CD8-positive, alpha-beta T cell (primary cell): ENCODE measurements at regions of chr10 and their contacts with region 1.

Region 1: DNA sequence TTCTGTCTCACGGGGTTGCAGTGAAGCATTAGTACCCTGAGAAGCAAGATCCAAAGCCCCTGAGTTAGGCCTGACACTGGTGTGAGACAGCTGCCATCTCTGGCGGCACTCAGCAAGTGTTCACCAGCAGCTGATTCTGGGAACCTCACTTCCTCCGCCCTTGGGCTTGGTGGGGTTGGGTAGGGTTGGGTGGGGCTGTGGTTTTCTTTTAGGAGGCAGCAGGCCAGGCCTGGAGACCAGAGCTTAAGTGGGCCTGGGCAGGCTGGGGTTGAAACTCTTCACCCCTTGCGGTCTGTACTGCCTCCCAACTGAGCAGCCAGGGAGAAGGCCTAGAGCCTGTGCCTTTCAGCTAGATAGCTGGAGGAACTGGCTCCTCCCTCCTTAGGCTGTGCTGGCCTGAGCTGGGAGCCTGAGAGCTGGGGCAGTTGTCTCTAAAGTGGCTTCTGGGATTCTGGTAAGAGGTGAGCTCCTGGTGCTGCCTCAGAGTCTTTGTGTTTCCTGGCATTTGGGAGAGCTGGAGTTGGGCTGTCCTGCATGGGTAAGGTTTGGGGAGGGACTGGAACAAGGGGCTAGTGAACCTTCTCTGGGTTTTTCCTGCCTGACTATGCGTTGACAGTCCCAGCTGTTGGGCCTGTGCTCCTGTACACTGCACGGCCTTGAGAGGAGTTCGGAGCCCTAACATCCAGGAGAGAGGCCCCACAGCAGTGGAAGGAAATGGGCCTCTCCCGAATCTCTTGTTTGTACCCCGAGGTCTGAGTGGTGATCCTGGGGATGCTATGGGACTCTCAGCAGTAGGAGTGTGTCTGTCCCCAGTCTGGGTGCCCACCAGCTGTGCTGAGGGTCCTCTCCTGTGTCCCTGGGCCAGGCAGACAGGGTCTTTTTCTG is 5.2 kb downstream of the TSPAN14 start:
- DNase-seq: peak in 8 of 9 experiments; percentile 54 to 87 (median 75)
- ATAC-seq: peak; percentile 57
- H3K4me3 ChIP-seq: peak overlapping the region; percentile 44 to 51
- H3K4me3 Mint-ChIP-seq: peak overlapping the region; percentile 99
- H3K27ac ChIP-seq: peak overlapping the region; percentile 39 to 71
- H3K27ac Mint-ChIP-seq: peak overlapping the region; percentile 98
- H3K4me1 ChIP-seq: peaks cover 85% of the 10 kb centered on the region
- H3K4me1 Mint-ChIP-seq: peaks cover 84% of the 10 kb centered on the region
- H3K27me3 ChIP-seq: no peaks in the 10 kb centered on the region
- H3K27me3 Mint-ChIP-seq: no peaks in the 10 kb centered on the region
- CTCF ChIP-seq: no peak

Region 2: DNA sequence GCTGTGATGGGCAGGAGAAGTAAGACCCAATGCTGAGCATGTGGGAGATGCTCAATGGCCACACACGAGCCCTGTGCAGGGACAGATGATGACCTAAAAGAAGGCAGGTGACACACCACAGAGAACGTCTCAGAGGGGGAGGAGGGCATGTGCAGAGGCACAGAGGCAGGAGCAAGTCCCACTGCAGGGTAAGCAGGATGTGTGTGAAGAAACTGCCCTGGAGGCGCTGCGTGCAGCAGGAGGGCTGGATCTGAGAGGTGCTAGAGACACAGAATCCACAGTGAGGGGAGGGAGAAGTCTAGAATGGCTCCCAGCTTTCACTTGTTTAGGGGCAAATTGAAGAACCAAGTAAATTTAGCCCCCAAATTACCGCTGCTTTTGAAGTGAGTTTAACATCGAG is 87.8 kb before region 1 on chr10:
- CTCF ChIA-PET with region 1: no interaction called
- POLR2A ChIA-PET with region 1: no interaction called
- intact Hi-C with region 1: no loop called
- DNase-seq: no peak
- ATAC-seq: no peak
- H3K4me3 ChIP-seq: no peak overlapping the region
- H3K4me3 Mint-ChIP-seq: no peak overlapping the region
- H3K27ac ChIP-seq: no peak overlapping the region
- H3K27ac Mint-ChIP-seq: no peak overlapping the region
- H3K4me1 ChIP-seq: no peaks in the 10 kb centered on the region
- H3K4me1 Mint-ChIP-seq: no peaks in the 10 kb centered on the region
- H3K27me3 ChIP-seq: no peaks in the 10 kb centered on the region
- H3K27me3 Mint-ChIP-seq: peaks cover 7% of the 10 kb centered on the region
- CTCF ChIP-seq: no peak

Region 3: DNA sequence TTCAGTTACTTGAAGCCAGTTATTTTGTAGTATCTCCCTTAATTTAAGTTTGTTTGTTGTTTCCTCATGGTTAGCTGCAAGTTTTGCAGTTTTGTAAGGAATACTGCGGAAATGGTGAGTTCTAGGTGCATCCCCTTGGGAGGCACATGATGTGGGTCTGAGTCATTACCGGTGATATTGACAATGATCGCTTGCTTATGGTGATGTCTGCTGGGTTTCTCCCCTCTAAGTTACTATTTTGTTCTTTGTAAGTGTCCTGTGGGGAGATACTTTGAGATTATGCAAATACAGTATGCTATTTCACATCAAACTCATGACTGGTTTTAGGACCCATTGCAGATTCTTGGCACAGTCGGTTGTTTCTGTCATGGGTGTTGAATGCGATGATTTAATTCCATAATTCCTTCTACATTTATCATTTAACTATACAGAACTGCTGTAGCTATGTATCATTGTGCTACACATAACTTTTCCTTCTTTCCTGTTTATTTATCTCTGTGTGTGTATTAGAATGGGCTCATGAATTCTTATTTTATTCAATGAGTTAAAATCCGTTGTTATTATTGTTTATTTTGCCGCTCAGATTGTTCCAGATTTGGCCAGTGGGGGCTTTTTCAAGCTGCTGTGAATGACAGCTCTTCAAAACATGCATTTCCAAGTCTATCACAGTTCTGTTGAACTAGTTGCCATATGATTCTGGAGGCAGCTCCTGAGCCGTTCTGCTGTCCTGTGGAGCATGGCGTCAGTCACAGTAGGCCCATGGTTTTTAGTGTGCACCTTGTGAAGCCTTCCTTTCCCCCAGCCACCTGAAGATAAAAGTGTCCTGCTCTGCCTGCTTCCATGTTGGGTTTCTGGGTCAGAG is 13.2 kb after region 1 on chr10:
- CTCF ChIA-PET with region 1: interaction called, 312 read pairs
- POLR2A ChIA-PET with region 1: interaction called, 36 read pairs
- intact Hi-C with region 1: loop called (anchors 1 to 2 kb)
- DNase-seq: peak in 4 of 9 experiments; percentile 45 to 82 (median 60)
- ATAC-seq: peak; percentile 62
- H3K4me3 ChIP-seq: peak overlapping the region in 1 of 2 experiments; percentile 23
- H3K4me3 Mint-ChIP-seq: peak overlapping the region; percentile 60
- H3K27ac ChIP-seq: peak overlapping the region; percentile 16 to 81
- H3K27ac Mint-ChIP-seq: peak overlapping the region; percentile 97
- H3K4me1 ChIP-seq: peaks cover 83% of the 10 kb centered on the region
- H3K4me1 Mint-ChIP-seq: peaks cover 92% of the 10 kb centered on the region
- H3K27me3 ChIP-seq: no peaks in the 10 kb centered on the region
- H3K27me3 Mint-ChIP-seq: no peaks in the 10 kb centered on the region
- CTCF ChIP-seq: no peak

Region 4: GRCh38 chr10:80487791-80488538 is 28.7 kb after region 1 on chr10:
- CTCF ChIA-PET with region 1: interaction called, 227 read pairs
- POLR2A ChIA-PET with region 1: interaction called, 122 read pairs
- intact Hi-C with region 1: loop called (anchors 2 to 5 kb)
- DNase-seq: peak in 8 of 9 experiments; percentile 55 to 87 (median 74)
- ATAC-seq: peak; percentile 68
- H3K4me3 ChIP-seq: peak overlapping the region; percentile 15 to 29
- H3K4me3 Mint-ChIP-seq: peak overlapping the region; percentile 77
- H3K27ac ChIP-seq: peak overlapping the region; percentile 24 to 75
- H3K27ac Mint-ChIP-seq: peak overlapping the region; percentile 92
- H3K4me1 ChIP-seq: peaks cover 98% of the 10 kb centered on the region
- H3K4me1 Mint-ChIP-seq: peaks cover 96% of the 10 kb centered on the region
- H3K27me3 ChIP-seq: no peaks in the 10 kb centered on the region
- H3K27me3 Mint-ChIP-seq: no peaks in the 10 kb centered on the region
- CTCF ChIP-seq: no peak

Region 5: DNA sequence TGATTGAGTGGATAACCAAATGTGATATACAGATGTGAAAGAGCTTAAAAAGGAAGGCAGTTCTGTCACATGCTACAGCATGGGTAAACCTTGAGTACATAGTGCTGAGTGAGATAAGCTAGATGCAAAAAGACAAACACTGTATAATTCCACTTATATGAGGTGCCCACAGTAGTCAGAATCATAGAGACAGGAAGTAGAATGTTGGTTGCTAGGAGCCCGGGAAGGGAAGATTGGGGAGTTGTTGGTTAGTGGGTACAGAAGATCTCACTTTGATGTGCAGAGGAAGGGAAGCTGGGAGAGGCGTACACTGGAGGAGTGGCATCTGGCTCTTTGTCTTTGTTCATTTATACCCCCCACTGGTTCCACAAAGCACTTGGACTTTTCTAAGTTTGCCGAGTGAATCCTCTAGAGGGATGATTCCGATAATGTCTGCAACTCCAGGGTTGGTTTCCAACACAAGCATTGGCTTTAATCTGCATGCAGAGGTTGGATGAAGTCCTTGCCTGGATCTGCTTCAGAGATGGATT is 34.3 kb after region 1 on chr10:
- CTCF ChIA-PET with region 1: interaction called, 404 read pairs
- POLR2A ChIA-PET with region 1: interaction called, 122 read pairs
- intact Hi-C with region 1: loop called in 1 of 2 experiments (anchors 5 kb)
- DNase-seq: peak in 3 of 9 experiments; percentile 25 to 73 (median 37)
- ATAC-seq: peak; percentile 66
- H3K4me3 ChIP-seq: no peak overlapping the region
- H3K4me3 Mint-ChIP-seq: peak overlapping the region; percentile 51
- H3K27ac ChIP-seq: peak overlapping the region in 1 of 2 experiments; percentile 68
- H3K27ac Mint-ChIP-seq: peak overlapping the region; percentile 89
- H3K4me1 ChIP-seq: peaks cover 98% of the 10 kb centered on the region
- H3K4me1 Mint-ChIP-seq: peaks cover 99% of the 10 kb centered on the region
- H3K27me3 ChIP-seq: no peaks in the 10 kb centered on the region
- H3K27me3 Mint-ChIP-seq: no peaks in the 10 kb centered on the region
- CTCF ChIP-seq: no peak

Region 6: GRCh38 chr10:80498833-80499741 is 39.8 kb after region 1 on chr10:
- CTCF ChIA-PET with region 1: interaction called, 404 read pairs
- POLR2A ChIA-PET with region 1: interaction called, 80 read pairs
- intact Hi-C with region 1: loop called in 1 of 2 experiments (anchors 2 kb)
- DNase-seq: peak in 7 of 9 experiments; percentile 27 to 66 (median 55)
- ATAC-seq: peak; percentile 39
- H3K4me3 ChIP-seq: peak overlapping the region; percentile 12 to 29
- H3K4me3 Mint-ChIP-seq: peak overlapping the region; percentile 74
- H3K27ac ChIP-seq: peak overlapping the region; percentile 11 to 84
- H3K27ac Mint-ChIP-seq: peak overlapping the region; percentile 96
- H3K4me1 ChIP-seq: peaks cover 98% of the 10 kb centered on the region
- H3K4me1 Mint-ChIP-seq: peaks cover 97% of the 10 kb centered on the region
- H3K27me3 ChIP-seq: no peaks in the 10 kb centered on the region
- H3K27me3 Mint-ChIP-seq: no peaks in the 10 kb centered on the region
- CTCF ChIP-seq: no peak

Region 7: GRCh38 chr10:80589726-80590373 is 130.6 kb after region 1 on chr10:
- CTCF ChIA-PET with region 1: no interaction called
- POLR2A ChIA-PET with region 1: no interaction called
- intact Hi-C with region 1: no loop called
- DNase-seq: no peak
- ATAC-seq: no peak
- H3K4me3 ChIP-seq: no peak overlapping the region
- H3K4me3 Mint-ChIP-seq: no peak overlapping the region
- H3K27ac ChIP-seq: no peak overlapping the region
- H3K27ac Mint-ChIP-seq: no peak overlapping the region
- H3K4me1 ChIP-seq: no peaks in the 10 kb centered on the region
- H3K4me1 Mint-ChIP-seq: no peaks in the 10 kb centered on the region
- H3K27me3 ChIP-seq: peaks cover 0 to 2% of the 10 kb centered on the region in 2 experiments
- H3K27me3 Mint-ChIP-seq: peaks cover 2% of the 10 kb centered on the region
- CTCF ChIP-seq: no peak